Activated CD4-positive, alpha-beta memory T cell treated with anti-CD3 and anti-CD28 coated beads for 36 hours (primary cell): ENCODE measurements at regions of chr6 and their contacts with region 1.

Region 1: DNA sequence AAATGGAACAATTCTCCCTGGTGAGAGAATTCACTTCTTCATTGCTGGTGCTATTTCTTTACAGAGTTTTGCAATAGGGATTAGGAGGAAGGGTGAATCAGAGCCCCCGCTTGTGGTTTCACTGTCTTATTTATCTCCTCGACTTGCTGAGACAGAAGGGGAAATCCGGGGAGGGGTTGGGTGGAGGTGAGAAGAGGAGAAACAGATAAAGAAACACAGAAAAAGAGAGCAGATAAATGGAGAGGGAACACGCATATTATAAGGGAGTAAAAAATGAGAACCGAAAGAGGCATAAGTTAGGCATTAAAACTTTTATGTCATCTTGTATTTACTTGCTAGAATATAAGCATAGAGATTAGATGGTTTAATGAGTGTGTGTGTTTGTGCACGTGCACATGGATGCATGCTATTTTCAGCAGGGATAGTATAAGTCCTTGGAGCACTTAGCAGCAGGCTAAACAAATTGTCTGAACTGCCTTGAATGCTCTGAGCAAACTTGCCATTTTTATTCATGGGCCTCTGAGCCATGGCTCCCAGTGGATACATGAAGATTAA is 105.0 kb downstream of the OLIG3 start:
- DNase-seq: peak; percentile 90
- H3K4me3 Mint-ChIP-seq: peak overlapping the region; percentile 40
- H3K27ac Mint-ChIP-seq: peak overlapping the region; percentile 80
- H3K4me1 Mint-ChIP-seq: peaks cover 56% of the 10 kb centered on the region
- H3K27me3 Mint-ChIP-seq: no peaks in the 10 kb centered on the region

Region 2: DNA sequence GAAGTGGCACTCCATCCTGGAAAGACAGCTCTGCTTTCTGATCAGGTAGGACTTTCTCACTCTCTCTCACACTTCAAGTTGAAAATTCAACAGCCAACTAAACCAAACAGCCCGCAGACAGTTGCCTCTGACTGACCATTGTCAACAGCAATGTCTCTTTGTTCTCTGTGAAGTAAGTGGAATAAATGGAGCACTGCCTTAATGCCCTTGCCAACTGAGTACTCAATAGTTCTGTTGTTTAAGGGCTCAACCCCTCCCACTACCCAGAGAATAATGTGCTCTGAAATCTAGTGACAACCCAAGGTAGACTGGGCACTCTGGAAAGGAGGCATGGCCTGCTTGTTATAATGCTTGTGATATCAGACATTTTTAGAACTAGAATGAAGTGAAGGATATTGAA is 1082.8 kb before region 1 on chr6:
- CTCF ChIA-PET with region 1: no interaction called
- POLR2A ChIA-PET with region 1: no interaction called
- intact Hi-C with region 1: no loop called
- DNase-seq: no peak
- H3K4me3 Mint-ChIP-seq: no peak overlapping the region
- H3K27ac Mint-ChIP-seq: no peak overlapping the region
- H3K4me1 Mint-ChIP-seq: no peaks in the 10 kb centered on the region
- H3K27me3 Mint-ChIP-seq: peaks cover 3% of the 10 kb centered on the region

Region 3: GRCh38 chr6:137341681-137342195 is 47.5 kb before region 1 on chr6:
- CTCF ChIA-PET with region 1: interaction called, 3 read pairs
- POLR2A ChIA-PET with region 1: no interaction called
- intact Hi-C with region 1: loop called (anchors 2 kb)
- DNase-seq: peak; percentile 66
- H3K4me3 Mint-ChIP-seq: peak overlapping the region; percentile 11
- H3K27ac Mint-ChIP-seq: no peak overlapping the region
- H3K4me1 Mint-ChIP-seq: peaks cover 13% of the 10 kb centered on the region
- H3K27me3 Mint-ChIP-seq: peaks cover 4% of the 10 kb centered on the region

Region 4: DNA sequence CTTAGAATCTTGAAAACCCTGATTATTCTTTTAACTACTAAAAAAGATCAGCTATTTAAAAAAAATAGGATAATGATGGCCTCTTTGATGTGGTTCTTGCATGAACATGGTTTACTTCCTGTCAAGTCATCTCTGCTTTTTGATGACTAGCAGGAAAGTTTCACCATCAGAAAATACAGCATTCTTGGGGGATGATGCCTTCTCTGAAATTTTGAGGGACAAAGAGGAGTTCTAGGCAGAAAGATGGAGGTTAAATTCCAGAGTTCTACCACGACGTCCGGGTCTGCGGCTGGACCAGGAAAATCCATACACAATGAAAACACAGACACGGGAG is 25.5 kb before region 1 on chr6:
- CTCF ChIA-PET with region 1: no interaction called
- POLR2A ChIA-PET with region 1: no interaction called
- intact Hi-C with region 1: loop called (anchors 1 kb)
- DNase-seq: no peak
- H3K4me3 Mint-ChIP-seq: no peak overlapping the region
- H3K27ac Mint-ChIP-seq: no peak overlapping the region
- H3K4me1 Mint-ChIP-seq: peaks cover 20% of the 10 kb centered on the region
- H3K27me3 Mint-ChIP-seq: no peaks in the 10 kb centered on the region

Region 5: GRCh38 chr6:137399881-137400443 is 10.7 kb after region 1 on chr6:
- CTCF ChIA-PET with region 1: no interaction called
- POLR2A ChIA-PET with region 1: no interaction called
- intact Hi-C with region 1: loop called (anchors 1 kb)
- DNase-seq: peak; percentile 64
- H3K4me3 Mint-ChIP-seq: no peak overlapping the region
- H3K27ac Mint-ChIP-seq: peak overlapping the region; percentile 24
- H3K4me1 Mint-ChIP-seq: peaks cover 15% of the 10 kb centered on the region
- H3K27me3 Mint-ChIP-seq: no peaks in the 10 kb centered on the region

Region 6: DNA sequence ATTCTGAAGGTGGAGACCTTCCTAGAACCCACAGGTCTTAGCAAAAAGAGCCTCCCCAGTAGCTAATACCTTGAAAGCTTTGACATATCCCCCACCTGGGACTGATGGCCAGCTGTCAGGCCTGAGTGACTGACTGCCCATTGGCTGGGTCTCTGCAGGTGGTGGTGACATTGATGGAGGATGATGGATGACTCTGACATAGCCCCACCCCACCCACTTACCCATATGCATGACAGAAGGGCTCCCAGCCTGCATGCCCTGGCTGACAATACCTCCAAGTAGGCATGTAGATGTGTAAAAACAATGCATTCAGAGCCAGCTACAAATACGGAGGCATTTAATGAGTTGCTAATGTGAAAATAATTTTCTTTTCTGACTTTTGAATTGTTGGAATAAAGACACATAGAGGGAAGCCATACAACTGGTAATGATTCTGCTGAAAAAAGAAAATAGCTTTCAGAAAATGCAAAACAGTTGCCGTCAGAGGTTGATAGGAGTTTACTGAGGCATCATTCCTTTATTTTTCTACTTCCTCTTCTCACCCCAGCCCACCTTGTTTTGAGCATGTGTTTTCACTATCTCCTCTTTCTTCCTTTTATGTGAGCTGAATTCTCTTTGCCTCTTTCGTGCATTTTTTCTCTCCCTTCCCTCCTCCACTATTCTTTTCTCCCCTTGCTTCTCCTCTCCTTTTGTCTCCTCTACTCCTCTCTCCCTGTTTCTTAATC is 34.4 kb after region 1 on chr6:
- CTCF ChIA-PET with region 1: no interaction called
- POLR2A ChIA-PET with region 1: no interaction called
- intact Hi-C with region 1: no loop called
- DNase-seq: no peak
- H3K4me3 Mint-ChIP-seq: no peak overlapping the region
- H3K27ac Mint-ChIP-seq: no peak overlapping the region
- H3K4me1 Mint-ChIP-seq: peaks cover 18% of the 10 kb centered on the region
- H3K27me3 Mint-ChIP-seq: no peaks in the 10 kb centered on the region